ENCODE measurements at regions of chr12 and their contacts with region 1.

Region 1: DNA sequence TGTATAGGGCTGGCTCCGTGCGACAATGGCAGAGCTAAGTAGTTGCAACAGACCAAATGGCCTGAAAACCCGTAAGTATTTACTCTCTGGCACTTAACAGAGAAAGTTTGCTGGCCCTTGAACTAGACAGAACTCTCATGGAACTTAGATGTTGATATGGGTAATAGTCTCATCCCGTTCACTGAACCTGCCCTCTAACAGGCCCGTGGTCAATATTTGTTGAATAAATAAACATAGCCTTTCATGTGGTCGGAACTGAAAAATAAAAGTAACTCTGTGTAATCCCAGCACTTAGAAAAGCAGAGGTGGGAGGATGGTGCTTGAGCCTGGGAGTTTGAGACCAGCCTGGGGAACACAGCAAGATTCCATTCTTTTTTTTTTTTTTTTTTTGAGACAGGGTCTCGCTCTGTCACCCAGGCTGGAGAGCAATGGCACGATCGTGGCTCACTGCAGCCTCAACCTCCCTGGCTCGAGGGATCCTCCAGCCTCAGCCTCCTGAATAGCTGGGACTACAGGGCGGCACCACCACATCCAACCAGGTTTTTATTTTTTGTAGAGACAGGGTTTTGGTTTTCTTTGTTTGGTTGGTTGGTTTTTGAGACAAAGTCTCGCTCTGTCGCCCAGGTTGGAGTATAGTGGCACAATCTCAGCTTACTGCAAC is 29.7 kb downstream of the KDM2B start:
- DNase-seq: no peak
- H3K4me3 ChIP-seq: no peak overlapping the region
- H3K27ac ChIP-seq: no peak overlapping the region
- H3K4me1 ChIP-seq: no peaks in the 10 kb centered on the region
- H3K27me3 ChIP-seq: no peaks in the 10 kb centered on the region
- CTCF ChIP-seq: no peak
- POLR2A ChIP-seq: no peak

Region 2: GRCh38 chr12:121499929-121500793 is 50.9 kb before region 1 on chr12:
- intact Hi-C with region 1: no loop called
- DNase-seq: peak; percentile 86
- H3K4me3 ChIP-seq: no peak overlapping the region
- H3K27ac ChIP-seq: peak overlapping the region in 1 of 2 donors; percentile 41
- H3K4me1 ChIP-seq: peaks cover 6% of the 10 kb centered on the region
- H3K27me3 ChIP-seq: no peaks in the 10 kb centered on the region
- CTCF ChIP-seq: peak; percentile 72 to 99 (median 89)
- POLR2A ChIP-seq: no peak

Region 3: DNA sequence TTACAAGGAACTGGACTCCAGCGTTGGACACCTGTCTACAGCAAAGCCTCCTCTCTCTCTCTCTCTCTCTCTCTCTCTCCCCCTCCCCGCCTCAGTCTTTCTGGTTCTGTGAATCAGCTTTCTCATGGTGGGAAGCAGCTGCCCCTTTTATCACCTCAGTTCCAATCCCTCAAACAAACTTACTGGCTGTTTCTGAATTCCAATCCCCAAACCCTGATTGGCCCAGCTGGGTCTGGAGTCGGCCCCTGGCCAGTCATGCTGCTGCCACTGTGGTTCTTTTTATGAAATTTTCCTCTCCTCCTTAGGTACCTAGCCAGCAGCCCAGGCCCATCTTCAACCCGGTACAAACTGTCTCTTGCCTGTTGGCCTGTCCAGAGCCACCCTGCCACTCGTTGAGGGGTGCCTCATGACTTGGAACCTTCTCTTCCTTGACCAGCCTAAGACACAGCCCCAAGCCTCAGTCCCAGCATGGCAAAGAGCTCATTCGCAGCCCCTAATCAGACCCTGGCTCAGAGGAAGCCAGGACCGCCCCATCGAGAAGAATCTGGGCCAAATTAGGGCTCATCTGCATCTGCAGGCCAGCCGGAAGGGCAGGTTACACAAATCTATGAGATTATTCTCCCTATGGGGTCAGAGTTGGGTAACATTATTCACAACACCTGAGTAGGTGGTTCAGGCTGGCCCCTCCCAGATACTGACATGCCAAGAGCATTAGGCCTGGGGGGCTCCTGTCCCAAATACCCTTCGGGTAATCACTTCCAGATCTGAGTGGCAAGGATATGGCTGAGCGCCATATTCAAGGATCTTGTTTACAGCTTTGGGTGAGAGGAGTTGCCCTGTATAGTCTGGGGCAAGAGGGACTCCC is 127.8 kb after region 1 on chr12:
- intact Hi-C with region 1: loop called (anchors 5 kb)
- DNase-seq: no peak
- H3K4me3 ChIP-seq: no peak overlapping the region
- H3K27ac ChIP-seq: no peak overlapping the region
- H3K4me1 ChIP-seq: no peaks in the 10 kb centered on the region
- H3K27me3 ChIP-seq: no peaks in the 10 kb centered on the region
- CTCF ChIP-seq: no peak
- POLR2A ChIP-seq: no peak

Measured in testis (tissue), 5 donors.